Activated B cell treated with CpG ODN at 0.5 μM for 24 hours (primary cell): ENCODE measurements at regions of chr5 and their contacts with region 1.

Region 1: GRCh38 chr5:88251048-88251711 is 17.5 kb downstream of the TMEM161B start:
- DNase-seq: no peak
- ATAC-seq: peak; percentile 60
- H3K4me3 Mint-ChIP-seq: no peak overlapping the region
- H3K27ac Mint-ChIP-seq: peak overlapping the region; percentile 43
- H3K4me1 Mint-ChIP-seq: peaks cover 47% of the 10 kb centered on the region
- H3K27me3 Mint-ChIP-seq: no peaks in the 10 kb centered on the region
- CTCF ChIP-seq: no peak

Region 2: GRCh38 chr5:88226881-88227450 is 24.2 kb before region 1 on chr5:
- CTCF ChIA-PET with region 1: no interaction called
- POLR2A ChIA-PET with region 1: no interaction called
- intact Hi-C with region 1: no loop called
- DNase-seq: no peak
- ATAC-seq: no peak
- H3K4me3 Mint-ChIP-seq: no peak overlapping the region
- H3K27ac Mint-ChIP-seq: no peak overlapping the region
- H3K4me1 Mint-ChIP-seq: no peaks in the 10 kb centered on the region
- H3K27me3 Mint-ChIP-seq: no peaks in the 10 kb centered on the region
- CTCF ChIP-seq: no peak

Region 3: DNA sequence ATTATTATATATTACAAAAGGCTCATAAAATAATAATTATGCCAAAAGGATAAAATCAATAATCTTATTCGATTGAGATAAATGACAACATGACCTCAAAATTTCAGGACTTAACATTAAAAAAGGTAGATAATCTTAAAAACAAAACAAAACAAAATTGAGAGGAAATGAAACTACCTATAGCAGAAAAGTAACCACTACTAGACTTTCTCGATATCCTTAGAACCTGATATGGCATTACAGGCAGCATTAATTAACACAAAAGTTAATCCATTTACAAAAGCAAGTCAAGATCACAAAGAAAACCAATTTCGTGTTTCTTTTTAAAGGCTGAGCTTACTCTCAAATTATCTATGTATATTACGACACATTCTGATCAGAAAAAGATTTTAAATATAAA is 12.4 kb before region 1 on chr5:
- CTCF ChIA-PET with region 1: interaction called, 3 read pairs
- POLR2A ChIA-PET with region 1: no interaction called
- intact Hi-C with region 1: loop called (anchors 1 kb)
- DNase-seq: no peak
- ATAC-seq: no peak
- H3K4me3 Mint-ChIP-seq: no peak overlapping the region
- H3K27ac Mint-ChIP-seq: no peak overlapping the region
- H3K4me1 Mint-ChIP-seq: peaks cover 13% of the 10 kb centered on the region
- H3K27me3 Mint-ChIP-seq: no peaks in the 10 kb centered on the region
- CTCF ChIP-seq: no peak

Region 4: GRCh38 chr5:88268385-88269184 is 17.4 kb after region 1 on chr5 and contains the start of gene TMEM161B:
- CTCF ChIA-PET with region 1: no interaction called
- POLR2A ChIA-PET with region 1: no interaction called
- intact Hi-C with region 1: loop called (anchors 1 kb)
- DNase-seq: peak; percentile 83
- ATAC-seq: peak; percentile 99
- H3K4me3 Mint-ChIP-seq: peak within 1 kb of the TSS; percentile 100
- H3K27ac Mint-ChIP-seq: peak within 1 kb of the TSS; percentile 96
- H3K4me1 Mint-ChIP-seq: peaks cover 48% of the 10 kb centered on the region
- H3K27me3 Mint-ChIP-seq: no peaks in the 10 kb centered on the region
- CTCF ChIP-seq: no peak
- total RNA-seq, gene TMEM161B: 26.4 and 31.1 TPM in 2 replicates